Common myeloid progenitor, CD34-positive (primary cell): ENCODE measurements at regions of chr10 and their contacts with region 1.

Region 1: GRCh38 chr10:111076191-111076681 is 593 bp upstream of the ADRA2A start:
- DNase-seq: peak; percentile 64 to 85 (median 83)
- H3K4me3 ChIP-seq: peak overlapping the region; percentile 23 to 82 (median 63)
- H3K27ac ChIP-seq: no peak overlapping the region
- H3K4me1 ChIP-seq: peaks cover 0 to 30% (median 24%) of the 10 kb centered on the region in 4 experiments
- H3K27me3 ChIP-seq: peaks cover 6 to 43% (median 36%) of the 10 kb centered on the region in 5 experiments

Region 2: DNA sequence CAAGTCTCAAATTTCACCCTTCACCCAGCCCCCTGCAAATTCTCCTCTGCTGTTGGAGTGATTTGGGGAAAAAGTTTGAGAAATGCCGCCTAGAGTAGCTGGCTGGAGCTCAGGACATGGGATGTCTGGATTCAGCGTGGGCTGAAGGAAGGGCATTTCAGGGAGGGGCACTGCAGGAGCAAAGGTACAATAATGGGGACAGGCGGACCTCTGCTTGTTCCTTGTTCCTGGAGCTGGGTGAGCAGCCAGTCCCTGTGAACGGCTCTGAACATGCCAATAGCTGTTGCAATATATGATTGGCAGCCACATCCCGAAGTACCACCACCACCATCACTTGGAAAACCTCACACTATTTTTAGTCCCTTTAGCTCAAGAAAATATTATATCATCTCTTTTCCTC is 24.0 kb after region 1 on chr10:
- CTCF ChIA-PET with region 1: interaction called, 15 read pairs
- POLR2A ChIA-PET with region 1: no interaction called
- DNase-seq: no peak
- H3K4me3 ChIP-seq: no peak overlapping the region
- H3K27ac ChIP-seq: no peak overlapping the region
- H3K4me1 ChIP-seq: no peaks in the 10 kb centered on the region
- H3K27me3 ChIP-seq: peaks cover 0 to 5% (median 0%) of the 10 kb centered on the region in 5 experiments

Region 3: GRCh38 chr10:111146025-111146640 is 69.9 kb after region 1 on chr10:
- CTCF ChIA-PET with region 1: interaction called, 17 read pairs
- POLR2A ChIA-PET with region 1: no interaction called
- DNase-seq: peak; percentile 72 to 94 (median 88)
- H3K4me3 ChIP-seq: no peak overlapping the region
- H3K27ac ChIP-seq: no peak overlapping the region
- H3K4me1 ChIP-seq: peaks cover 2 to 16% (median 13%) of the 10 kb centered on the region in 4 experiments
- H3K27me3 ChIP-seq: peaks cover 0 to under 1% (median 0%) of the 10 kb centered on the region in 5 experiments

Region 4: DNA sequence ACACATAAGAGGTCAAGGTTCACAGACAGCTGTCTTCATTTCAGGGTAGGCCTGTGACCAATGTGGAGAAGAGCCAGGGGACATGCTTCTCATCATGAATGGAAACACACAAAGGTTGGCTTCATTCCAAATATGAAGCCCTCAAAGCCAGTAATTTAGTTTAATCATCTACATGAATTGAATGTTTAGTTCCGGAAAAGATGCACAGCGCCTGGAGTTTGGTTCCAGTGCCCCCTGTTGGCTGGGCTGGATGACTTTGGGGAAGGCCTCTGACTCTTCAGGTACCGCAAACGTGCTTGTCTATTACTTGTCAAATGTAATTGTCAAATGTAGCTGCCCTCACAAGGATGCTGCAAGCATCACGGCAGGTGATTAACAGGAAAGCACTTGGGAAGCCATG is 131.3 kb after region 1 on chr10:
- CTCF ChIA-PET with region 1: interaction called, 237 read pairs
- POLR2A ChIA-PET with region 1: interaction called, 4 read pairs
- DNase-seq: peak; percentile 77 to 87 (median 81)
- H3K4me3 ChIP-seq: no peak overlapping the region
- H3K27ac ChIP-seq: no peak overlapping the region
- H3K4me1 ChIP-seq: no peaks in the 10 kb centered on the region
- H3K27me3 ChIP-seq: peaks cover 0 to 15% (median 3%) of the 10 kb centered on the region in 5 experiments

Region 5: GRCh38 chr10:111392159-111392558 is 315.9 kb after region 1 on chr10:
- CTCF ChIA-PET with region 1: no interaction called
- POLR2A ChIA-PET with region 1: no interaction called
- DNase-seq: no peak
- H3K4me3 ChIP-seq: no peak overlapping the region
- H3K27ac ChIP-seq: no peak overlapping the region
- H3K4me1 ChIP-seq: peaks cover 0 to 13% (median 4%) of the 10 kb centered on the region in 4 experiments
- H3K27me3 ChIP-seq: no peaks in the 10 kb centered on the region